Caco-2 (cell line): ENCODE measurements at regions of chr1 and their contacts with region 1.

Region 1: GRCh38 chr1:37533317-37534093 is 18.9 kb upstream of the MEAF6 start:
- DNase-seq: no peak
- H3K4me3 ChIP-seq: no peak overlapping the region
- H3K4me3 Mint-ChIP-seq: no peak overlapping the region
- H3K27ac Mint-ChIP-seq: peak overlapping the region; percentile 96
- H3K4me1 ChIP-seq: peaks cover 9% of the 10 kb centered on the region
- H3K4me1 Mint-ChIP-seq: peaks cover 17% of the 10 kb centered on the region
- H3K27me3 ChIP-seq: no peaks in the 10 kb centered on the region
- H3K27me3 Mint-ChIP-seq: no peaks in the 10 kb centered on the region
- CTCF ChIP-seq: no peak

Region 2: DNA sequence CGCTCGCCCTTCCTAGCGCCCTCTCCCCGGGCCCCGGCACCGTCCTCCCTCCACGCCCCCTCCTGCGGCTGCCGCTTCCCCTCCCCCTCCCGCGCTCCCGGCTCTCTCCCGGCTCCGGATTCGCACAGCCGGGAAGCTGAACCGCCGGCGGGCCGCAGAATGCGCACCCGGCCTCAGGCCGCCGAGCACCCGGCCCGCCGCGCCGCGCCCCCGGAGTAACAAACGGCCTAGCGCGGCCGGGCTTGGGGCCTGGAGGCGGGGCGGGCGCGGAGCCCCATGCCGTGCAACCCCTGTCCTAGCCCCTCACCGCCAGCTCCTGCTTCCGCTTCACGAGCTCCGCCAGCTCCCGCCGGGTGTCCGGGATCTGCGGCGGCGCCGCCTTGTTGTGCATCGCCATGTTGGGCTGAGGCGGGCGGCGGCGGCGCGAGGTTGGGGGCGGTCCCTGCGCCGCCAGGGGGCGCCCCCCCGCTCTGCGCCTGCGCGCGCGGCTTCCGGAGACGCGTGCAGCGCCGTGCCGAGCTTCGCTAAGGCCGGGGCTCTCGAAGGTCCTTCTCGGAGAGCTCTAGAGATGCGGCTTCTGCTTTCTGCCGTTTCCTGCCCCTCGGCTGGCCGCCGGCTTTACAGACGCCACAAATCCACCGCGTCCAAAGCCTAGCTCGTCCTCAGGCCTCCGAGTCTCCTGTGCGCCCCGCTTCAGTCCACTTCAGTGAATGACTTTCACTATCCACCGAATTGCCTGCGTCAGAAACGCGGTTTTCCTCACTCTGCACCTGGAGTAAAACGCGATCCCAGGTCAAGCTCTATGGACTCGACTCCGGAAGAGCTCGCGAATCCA is 18.9 kb before region 1 on chr1 and contains the start of gene MEAF6:
- CTCF ChIA-PET with region 1: interaction called, 3 read pairs
- POLR2A ChIA-PET with region 1: no interaction called
- intact Hi-C with region 1: loop called (anchors 2 kb)
- DNase-seq: peak; percentile 69 to 84
- H3K4me3 ChIP-seq: peak within 1 kb of the TSS; percentile 69
- H3K4me3 Mint-ChIP-seq: peak within 1 kb of the TSS; percentile 84
- H3K27ac Mint-ChIP-seq: peak within 1 kb of the TSS; percentile 84
- H3K4me1 ChIP-seq: peaks cover 10% of the 10 kb centered on the region; the same call in 1 of the 2 replicates
- H3K4me1 Mint-ChIP-seq: peaks cover 14% of the 10 kb centered on the region
- H3K27me3 ChIP-seq: no peaks in the 10 kb centered on the region
- H3K27me3 Mint-ChIP-seq: no peaks in the 10 kb centered on the region
- CTCF ChIP-seq: peak in 1 of 2 experiments; percentile 68
- total RNA-seq, gene MEAF6: 36.8 and 38.3 TPM in 2 replicates

Region 3: DNA sequence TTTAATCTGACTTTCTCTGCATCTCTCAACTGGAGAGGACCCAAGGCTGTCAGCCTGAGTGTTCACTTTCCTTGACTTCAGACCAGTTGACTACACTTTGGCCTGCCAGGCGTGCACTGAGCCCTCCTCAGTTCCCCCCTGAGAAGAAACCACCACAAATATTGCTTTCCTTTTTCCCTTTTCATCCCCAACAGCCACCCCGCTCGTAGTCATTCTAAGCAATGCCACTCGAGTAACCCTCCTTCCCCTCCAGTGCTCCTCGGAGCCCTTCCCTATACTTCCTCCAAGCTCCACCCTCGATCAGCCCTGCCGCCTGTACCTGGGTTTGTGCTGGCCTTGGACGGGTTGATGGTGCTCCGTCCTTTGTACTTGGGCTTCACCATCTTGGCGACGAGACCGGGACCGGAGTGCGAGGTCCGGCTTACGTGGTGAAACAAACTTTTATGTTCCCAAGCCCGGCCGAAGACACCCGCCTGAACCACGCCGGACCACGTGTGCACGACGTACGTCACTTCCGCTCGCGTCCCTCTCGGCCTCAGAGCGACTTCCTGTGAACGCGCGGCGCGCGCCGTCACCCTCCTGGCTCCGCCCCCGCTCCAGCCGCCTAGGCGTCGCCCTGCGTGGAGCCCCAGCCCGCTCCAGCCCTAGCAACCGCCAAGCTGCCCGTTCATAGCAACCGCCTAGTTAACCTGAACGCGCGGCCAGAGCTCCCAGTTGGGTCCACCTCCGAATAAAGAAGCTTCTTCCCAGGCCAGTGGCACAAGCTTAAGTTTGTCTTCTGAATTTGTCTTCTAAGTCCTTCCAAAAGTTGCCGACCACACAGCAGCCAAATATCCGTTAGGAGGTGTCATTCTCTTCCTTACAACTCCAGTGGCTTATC is 62.2 kb after region 1 on chr1 and contains the start of gene GNL2:
- CTCF ChIA-PET with region 1: no interaction called
- POLR2A ChIA-PET with region 1: no interaction called
- intact Hi-C with region 1: no loop called
- DNase-seq: peak; percentile 91 to 94
- H3K4me3 ChIP-seq: peak within 1 kb of the TSS; percentile 53
- H3K4me3 Mint-ChIP-seq: peak within 1 kb of the TSS; percentile 100
- H3K27ac Mint-ChIP-seq: peak within 1 kb of the TSS; percentile 100
- H3K4me1 ChIP-seq: 0 out of 2 replicates have a peak, but pooled peaks cover 6% of the 10 kb centered on the region
- H3K4me1 Mint-ChIP-seq: no peaks in the 10 kb centered on the region
- H3K27me3 ChIP-seq: no peaks in the 10 kb centered on the region
- H3K27me3 Mint-ChIP-seq: no peaks in the 10 kb centered on the region
- CTCF ChIP-seq: no peak
- total RNA-seq, gene GNL2: 51.6 and 53.8 TPM in 2 replicates

Region 4: DNA sequence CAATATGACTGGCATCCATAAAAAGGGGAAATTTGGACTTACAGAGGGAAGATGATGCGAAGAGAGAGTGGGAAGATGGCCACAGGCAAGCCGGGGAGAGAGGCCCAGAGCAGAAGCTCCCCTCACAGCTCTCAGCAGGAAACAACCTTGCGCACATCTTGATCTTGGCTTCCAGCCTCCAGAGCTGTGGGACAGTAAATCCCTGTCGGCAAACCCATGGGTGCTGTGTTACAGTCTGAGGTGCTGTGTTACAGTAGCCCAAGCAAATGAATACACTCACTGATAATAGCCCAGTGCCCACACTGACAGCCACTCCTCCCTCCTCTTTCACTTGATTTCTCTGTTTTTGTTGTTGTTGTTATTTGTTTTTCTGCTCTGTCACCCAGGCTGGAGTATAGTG is 181.2 kb after region 1 on chr1:
- CTCF ChIA-PET with region 1: no interaction called
- POLR2A ChIA-PET with region 1: no interaction called
- intact Hi-C with region 1: no loop called
- DNase-seq: no peak
- H3K4me3 ChIP-seq: no peak overlapping the region
- H3K4me3 Mint-ChIP-seq: no peak overlapping the region
- H3K27ac Mint-ChIP-seq: no peak overlapping the region
- H3K4me1 ChIP-seq: no peaks in the 10 kb centered on the region
- H3K4me1 Mint-ChIP-seq: no peaks in the 10 kb centered on the region
- H3K27me3 ChIP-seq: no peaks in the 10 kb centered on the region
- H3K27me3 Mint-ChIP-seq: no peaks in the 10 kb centered on the region
- CTCF ChIP-seq: no peak